ENCODE measurements at regions of chr16 and their contacts with region 1.

Region 1: GRCh38 chr16:23595951-23596720 is at the start of gene NDUFAB1:
- DNase-seq: peak; percentile 92
- ATAC-seq: peak; percentile 99
- H3K4me3 ChIP-seq: peak within 1 kb of the TSS; percentile 72 to 92 (median 87)
- H3K4me3 Mint-ChIP-seq: peak within 1 kb of the TSS; percentile 86
- H3K27ac ChIP-seq: peak within 1 kb of the TSS; percentile 37 to 91
- H3K27ac Mint-ChIP-seq: peak within 1 kb of the TSS; percentile 76
- H3K4me1 ChIP-seq: peaks cover 15 to 19% of the 10 kb centered on the region in 2 donors
- H3K4me1 Mint-ChIP-seq: peaks cover 24% of the 10 kb centered on the region
- H3K27me3 ChIP-seq: no peaks in the 10 kb centered on the region
- H3K27me3 Mint-ChIP-seq: no peaks in the 10 kb centered on the region
- CTCF ChIP-seq: peak; percentile 98
- total RNA-seq, gene NDUFAB1: 30.5 and 33.6 TPM in 2 replicates

Region 2: DNA sequence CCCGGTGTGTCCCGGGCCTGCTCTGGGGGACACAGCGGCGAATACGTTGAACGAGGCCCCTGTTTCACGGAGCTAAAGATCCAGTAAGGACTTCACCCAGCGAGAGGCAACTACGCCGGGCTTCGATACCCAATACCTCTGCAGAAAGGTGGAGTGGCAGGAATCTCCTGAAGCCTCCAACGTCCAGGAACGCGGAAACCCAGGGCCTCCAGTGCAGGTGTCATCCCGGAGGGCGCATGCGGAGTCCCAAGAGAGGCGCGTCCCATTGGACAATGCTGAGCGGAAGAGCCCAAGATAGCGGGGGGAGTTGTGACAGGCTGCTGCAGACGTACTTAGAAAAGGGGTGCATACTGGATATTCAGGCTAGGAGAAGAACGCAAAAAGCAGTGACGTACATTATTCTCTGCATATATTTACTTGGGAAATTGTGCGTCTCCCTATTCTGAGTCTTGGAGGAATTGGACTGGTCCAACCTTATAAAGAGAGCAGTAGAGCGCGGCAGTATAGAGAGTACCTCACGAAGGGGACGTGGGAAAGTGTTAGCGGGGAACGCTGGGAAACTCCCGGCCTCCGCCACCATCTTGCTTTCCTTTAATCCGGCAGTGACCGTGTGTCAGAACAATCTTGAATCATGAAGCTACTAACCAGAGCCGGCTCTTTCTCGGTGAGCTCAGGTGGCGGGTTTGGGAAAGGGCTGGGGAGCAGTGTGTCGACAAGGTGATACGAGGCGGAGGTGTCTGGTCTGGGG is 1643.2 kb before region 1 on chr16 and contains the start of gene UQCRC2:
- CTCF ChIA-PET with region 1: no interaction called
- POLR2A ChIA-PET with region 1: no interaction called
- intact Hi-C with region 1: loop called (anchors 5 kb)
- DNase-seq: peak; percentile 96
- ATAC-seq: peak; percentile 91
- H3K4me3 ChIP-seq: peak within 1 kb of the TSS; percentile 74 to 100 (median 97)
- H3K4me3 Mint-ChIP-seq: peak within 1 kb of the TSS; percentile 98
- H3K27ac ChIP-seq: peak within 1 kb of the TSS; percentile 88 to 97
- H3K27ac Mint-ChIP-seq: peak within 1 kb of the TSS; percentile 97
- H3K4me1 ChIP-seq: peaks cover 34 to 45% of the 10 kb centered on the region in 2 donors
- H3K4me1 Mint-ChIP-seq: peaks cover 65% of the 10 kb centered on the region
- H3K27me3 ChIP-seq: no peaks in the 10 kb centered on the region
- H3K27me3 Mint-ChIP-seq: no peaks in the 10 kb centered on the region
- CTCF ChIP-seq: no peak
- total RNA-seq, gene UQCRC2: 150 and 155 TPM in 2 replicates

Region 3: DNA sequence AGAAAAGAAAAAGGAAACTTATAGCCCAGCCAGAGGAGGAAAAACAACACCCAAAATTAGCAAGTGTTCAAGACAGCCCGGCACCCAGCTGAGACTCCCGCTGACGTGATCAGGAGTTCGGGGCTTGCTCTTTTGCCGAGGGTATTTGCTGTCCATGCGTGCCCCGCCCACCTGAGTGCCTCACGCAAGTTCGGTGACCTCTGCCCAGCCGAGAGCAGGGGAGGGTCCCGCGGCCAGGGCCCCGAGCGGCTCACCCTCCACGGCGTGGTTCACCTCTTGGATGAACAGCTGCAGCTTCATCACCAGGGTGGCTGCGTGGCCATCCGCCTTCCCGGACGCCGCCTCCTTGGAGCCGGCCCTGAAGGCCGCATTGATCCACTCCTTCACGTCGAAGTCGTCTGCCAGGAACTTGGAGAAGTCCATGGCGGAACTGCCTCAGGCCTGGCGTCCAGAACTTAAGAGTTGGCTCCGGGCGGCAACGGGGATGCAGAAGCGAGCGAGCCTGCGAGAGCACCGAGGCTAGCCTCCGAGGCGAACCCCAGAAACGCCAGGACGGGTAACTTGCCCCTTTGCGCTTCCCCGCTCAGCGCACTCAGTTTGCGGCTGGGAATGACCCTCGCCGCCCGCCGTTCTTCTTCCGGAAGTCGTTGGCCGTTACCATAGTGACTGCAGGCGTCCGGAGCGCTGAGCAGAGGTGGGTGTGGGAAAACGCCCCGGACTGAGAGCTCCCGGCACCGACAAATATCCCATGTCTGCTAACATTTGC is 143.4 kb before region 1 on chr16 and contains the start of gene COG7:
- CTCF ChIA-PET with region 1: interaction called, 4 read pairs
- POLR2A ChIA-PET with region 1: interaction called, 4 read pairs
- intact Hi-C with region 1: loop called (anchors 2 kb)
- DNase-seq: peak; percentile 92
- ATAC-seq: peak; percentile 90
- H3K4me3 ChIP-seq: peak within 1 kb of the TSS; percentile 67 to 99 (median 89)
- H3K4me3 Mint-ChIP-seq: peak within 1 kb of the TSS; percentile 91
- H3K27ac ChIP-seq: peak within 1 kb of the TSS in 1 of 2 donors; percentile 67
- H3K27ac Mint-ChIP-seq: peak within 1 kb of the TSS; percentile 90
- H3K4me1 ChIP-seq: peaks cover 11 to 13% of the 10 kb centered on the region in 2 donors
- H3K4me1 Mint-ChIP-seq: peaks cover 24% of the 10 kb centered on the region
- H3K27me3 ChIP-seq: no peaks in the 10 kb centered on the region
- H3K27me3 Mint-ChIP-seq: no peaks in the 10 kb centered on the region
- CTCF ChIP-seq: no peak
- total RNA-seq, gene COG7: 21.3 and 23.3 TPM in 2 replicates

Region 4: DNA sequence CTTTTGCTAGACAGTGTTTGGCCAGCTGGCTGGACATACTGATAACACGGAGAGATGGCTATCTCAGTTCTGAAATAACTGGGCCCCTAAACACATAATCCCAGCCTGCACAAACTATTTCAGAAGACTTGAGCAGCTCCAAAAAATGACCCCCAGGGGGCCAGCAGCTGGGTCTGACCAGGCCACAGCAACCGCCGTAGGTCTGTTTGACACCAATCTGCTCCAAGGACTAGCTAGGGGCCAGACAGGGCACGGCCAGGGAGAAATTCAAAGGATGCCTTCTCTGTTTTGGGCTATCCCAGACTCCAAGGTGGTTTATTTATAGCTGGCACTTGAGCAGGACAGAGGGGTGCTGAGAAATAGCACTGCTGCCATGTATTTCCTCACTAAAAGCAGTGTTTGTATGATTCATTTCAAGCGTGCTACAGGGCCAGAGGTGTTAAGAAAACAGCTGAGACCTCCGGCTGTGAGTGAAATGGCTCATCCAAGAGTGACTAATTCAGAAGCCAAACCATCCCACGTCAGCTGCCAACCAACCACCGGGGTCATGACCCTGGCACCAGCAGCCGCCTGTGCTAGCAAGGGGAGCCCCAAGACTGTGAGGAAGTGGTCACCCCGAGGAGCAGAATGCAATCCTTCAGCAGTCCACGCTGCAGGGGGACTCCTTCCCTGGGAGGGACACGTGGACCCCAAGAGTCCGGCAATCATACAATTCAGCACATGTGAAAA is 91.5 kb before region 1 on chr16:
- CTCF ChIA-PET with region 1: interaction called, 10 read pairs
- POLR2A ChIA-PET with region 1: interaction called, 3 read pairs
- intact Hi-C with region 1: no loop called
- DNase-seq: peak; percentile 66
- ATAC-seq: peak; percentile 56
- H3K4me3 ChIP-seq: peak overlapping the region in 4 of 5 experiments; percentile 1 to 91 (median 78)
- H3K4me3 Mint-ChIP-seq: peak overlapping the region; percentile 94
- H3K27ac ChIP-seq: peak overlapping the region; percentile 86 to 91
- H3K27ac Mint-ChIP-seq: peak overlapping the region; percentile 90
- H3K4me1 ChIP-seq: peaks cover 85 to 94% of the 10 kb centered on the region in 2 donors
- H3K4me1 Mint-ChIP-seq: peaks cover 87% of the 10 kb centered on the region
- H3K27me3 ChIP-seq: no peaks in the 10 kb centered on the region
- H3K27me3 Mint-ChIP-seq: no peaks in the 10 kb centered on the region
- CTCF ChIP-seq: no peak

Region 5: DNA sequence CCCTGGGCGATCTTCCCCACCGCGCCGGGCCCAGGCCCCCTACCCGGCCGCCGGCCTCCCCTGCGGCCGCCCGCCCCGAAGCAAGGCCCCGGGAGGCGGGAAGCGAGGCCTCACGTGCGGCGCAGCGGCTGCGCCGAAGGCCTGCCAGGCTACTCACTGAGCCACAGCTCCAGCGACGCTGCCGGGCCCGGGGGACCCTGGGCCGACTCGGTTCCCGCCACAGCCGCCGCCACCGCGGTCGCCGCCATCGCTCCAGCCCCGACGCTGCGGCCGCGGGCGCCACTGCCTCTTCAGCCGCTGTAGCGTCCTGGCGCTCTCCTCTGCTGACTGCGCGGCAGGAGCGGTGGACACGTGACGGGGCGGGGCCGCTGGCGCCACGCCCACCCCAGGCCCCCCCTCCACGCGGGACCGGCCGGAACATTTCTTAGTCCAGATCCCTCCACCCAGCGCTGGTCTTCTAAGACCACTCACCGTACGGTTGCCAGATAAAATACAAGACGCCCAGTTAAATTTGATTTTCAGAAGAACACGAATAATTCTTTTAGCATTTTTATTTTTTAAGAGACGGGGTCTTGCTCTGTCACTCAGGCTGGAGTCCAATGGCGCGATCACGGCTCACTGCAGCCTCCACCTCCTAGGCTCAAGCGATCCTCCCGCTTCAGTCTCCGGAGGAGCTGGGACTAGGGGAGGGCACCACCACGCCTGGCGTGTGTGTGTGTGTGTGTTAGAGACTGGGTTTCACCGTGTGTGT is 85.8 kb before region 1 on chr16 and contains the start of gene GGA2:
- CTCF ChIA-PET with region 1: interaction called, 8 read pairs
- POLR2A ChIA-PET with region 1: interaction called, 3 read pairs
- intact Hi-C with region 1: loop called (anchors 2 kb)
- DNase-seq: peak; percentile 91
- ATAC-seq: peak; percentile 78
- H3K4me3 ChIP-seq: peak within 1 kb of the TSS; percentile 75 to 95 (median 91)
- H3K4me3 Mint-ChIP-seq: peak within 1 kb of the TSS; percentile 94
- H3K27ac ChIP-seq: peak within 1 kb of the TSS; percentile 86 to 91
- H3K27ac Mint-ChIP-seq: peak within 1 kb of the TSS; percentile 90
- H3K4me1 ChIP-seq: peaks cover 29 to 49% of the 10 kb centered on the region in 2 donors
- H3K4me1 Mint-ChIP-seq: peaks cover 55% of the 10 kb centered on the region
- H3K27me3 ChIP-seq: no peaks in the 10 kb centered on the region
- H3K27me3 Mint-ChIP-seq: no peaks in the 10 kb centered on the region
- CTCF ChIP-seq: no peak
- total RNA-seq, gene GGA2: 832 and 865 TPM in 2 replicates

Region 6: GRCh38 chr16:23556881-23557778 is 39.0 kb before region 1 on chr16 and contains the starts of genes EARS2 and UBFD1:
- CTCF ChIA-PET with region 1: interaction called, 35 read pairs
- POLR2A ChIA-PET with region 1: no interaction called
- intact Hi-C with region 1: loop called (anchors 1 kb)
- DNase-seq: peak; percentile 99
- ATAC-seq: peak; percentile 87
- H3K4me3 ChIP-seq: peak within 1 kb of the TSS; percentile 60 to 90 (median 86)
- H3K4me3 Mint-ChIP-seq: peak within 1 kb of the TSS; percentile 93
- H3K27ac ChIP-seq: peak within 1 kb of the TSS; percentile 70 to 74
- H3K27ac Mint-ChIP-seq: peak within 1 kb of the TSS; percentile 93
- H3K4me1 ChIP-seq: peaks cover 11 to 20% of the 10 kb centered on the region in 2 donors
- H3K4me1 Mint-ChIP-seq: peaks cover 34% of the 10 kb centered on the region
- H3K27me3 ChIP-seq: no peaks in the 10 kb centered on the region
- H3K27me3 Mint-ChIP-seq: no peaks in the 10 kb centered on the region
- CTCF ChIP-seq: peak; percentile 79
- total RNA-seq, gene EARS2: 14.6 and 14.7 TPM in 2 replicates
- total RNA-seq, gene UBFD1: 47.3 and 49.2 TPM in 2 replicates

Region 7: DNA sequence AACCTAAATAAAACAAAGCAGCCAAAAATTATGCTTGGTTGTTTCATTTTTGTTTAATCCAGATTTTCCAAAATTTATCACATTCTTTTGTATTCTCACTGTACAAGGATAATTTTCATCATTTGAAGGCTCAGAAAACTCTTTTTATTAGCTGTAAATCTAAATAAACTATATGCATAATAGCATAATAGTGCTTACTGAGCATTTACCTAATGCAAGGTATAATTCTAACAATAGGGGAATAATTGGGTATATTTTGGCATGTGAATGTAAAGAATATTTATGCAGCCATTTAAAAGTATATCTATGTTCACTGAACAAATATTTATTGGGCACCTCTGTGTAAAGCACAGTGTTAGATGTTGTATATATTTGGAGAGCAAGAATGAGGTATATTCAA is 28.0 kb after region 1 on chr16:
- CTCF ChIA-PET with region 1: no interaction called
- POLR2A ChIA-PET with region 1: no interaction called
- intact Hi-C with region 1: no loop called
- DNase-seq: no peak
- ATAC-seq: no peak
- H3K4me3 ChIP-seq: no peak overlapping the region
- H3K4me3 Mint-ChIP-seq: no peak overlapping the region
- H3K27ac ChIP-seq: no peak overlapping the region
- H3K27ac Mint-ChIP-seq: no peak overlapping the region
- H3K4me1 ChIP-seq: no peaks in the 10 kb centered on the region
- H3K4me1 Mint-ChIP-seq: no peaks in the 10 kb centered on the region
- H3K27me3 ChIP-seq: no peaks in the 10 kb centered on the region
- H3K27me3 Mint-ChIP-seq: no peaks in the 10 kb centered on the region
- CTCF ChIP-seq: no peak

Region 8: DNA sequence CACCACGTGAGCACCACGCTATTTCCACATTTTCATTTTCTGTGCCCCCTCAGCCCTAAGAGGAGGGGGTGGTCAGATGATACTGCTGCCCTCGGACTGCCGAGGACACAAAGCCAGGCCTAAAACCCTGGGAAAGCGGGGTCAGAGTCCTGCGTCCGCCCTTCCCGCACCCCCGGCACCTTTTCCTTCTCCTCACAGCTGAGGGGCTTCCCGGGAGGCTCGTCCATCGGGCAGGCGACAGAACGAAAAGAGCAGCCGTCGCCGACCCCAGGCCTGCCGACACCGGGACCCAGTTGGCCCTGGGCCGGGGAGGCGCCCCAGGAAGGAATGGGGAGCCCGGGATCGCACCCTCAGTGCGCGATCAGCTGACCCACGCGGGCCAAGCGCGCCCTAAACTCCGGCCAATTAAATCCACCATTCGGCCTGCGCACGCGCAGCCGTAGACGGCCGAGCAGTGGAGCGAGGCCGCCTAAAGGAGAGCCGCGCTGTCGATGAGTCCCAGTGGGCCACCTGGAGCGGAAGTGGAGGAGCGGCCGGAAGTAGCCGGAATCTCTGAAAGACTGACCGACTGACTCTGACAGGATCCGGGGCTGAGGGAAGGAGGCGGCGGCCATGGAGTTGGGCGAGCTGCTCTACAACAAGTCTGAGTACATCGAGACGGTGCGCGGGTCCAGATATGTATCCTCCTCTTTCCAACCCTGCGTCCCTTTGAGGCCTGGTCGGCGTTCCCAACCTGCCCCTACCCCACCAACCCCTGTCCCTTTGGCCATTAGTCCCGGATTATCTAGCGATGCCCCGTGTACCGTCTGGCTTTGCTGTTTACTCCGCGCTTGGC is 45.0 kb after region 1 on chr16 and contains the starts of genes DCTN5 and PALB2:
- CTCF ChIA-PET with region 1: interaction called, 5 read pairs
- POLR2A ChIA-PET with region 1: no interaction called
- intact Hi-C with region 1: loop called (anchors 1 kb)
- DNase-seq: peak; percentile 91
- ATAC-seq: peak; percentile 95
- H3K4me3 ChIP-seq: peak within 1 kb of the TSS; percentile 89 to 100 (median 96)
- H3K4me3 Mint-ChIP-seq: peak within 1 kb of the TSS; percentile 99
- H3K27ac ChIP-seq: peak within 1 kb of the TSS; percentile 80 to 84
- H3K27ac Mint-ChIP-seq: peak within 1 kb of the TSS; percentile 98
- H3K4me1 ChIP-seq: peaks cover 13 to 20% of the 10 kb centered on the region in 2 donors
- H3K4me1 Mint-ChIP-seq: peaks cover 36% of the 10 kb centered on the region
- H3K27me3 ChIP-seq: no peaks in the 10 kb centered on the region
- H3K27me3 Mint-ChIP-seq: no peaks in the 10 kb centered on the region
- CTCF ChIP-seq: no peak
- total RNA-seq, gene DCTN5: 58.3 and 62.3 TPM in 2 replicates
- total RNA-seq, gene PALB2: 14.9 and 16.3 TPM in 2 replicates

Measured in B cell (primary cell).